ENCODE measurements at regions of chr9 and their contacts with region 1.

Region 1: DNA sequence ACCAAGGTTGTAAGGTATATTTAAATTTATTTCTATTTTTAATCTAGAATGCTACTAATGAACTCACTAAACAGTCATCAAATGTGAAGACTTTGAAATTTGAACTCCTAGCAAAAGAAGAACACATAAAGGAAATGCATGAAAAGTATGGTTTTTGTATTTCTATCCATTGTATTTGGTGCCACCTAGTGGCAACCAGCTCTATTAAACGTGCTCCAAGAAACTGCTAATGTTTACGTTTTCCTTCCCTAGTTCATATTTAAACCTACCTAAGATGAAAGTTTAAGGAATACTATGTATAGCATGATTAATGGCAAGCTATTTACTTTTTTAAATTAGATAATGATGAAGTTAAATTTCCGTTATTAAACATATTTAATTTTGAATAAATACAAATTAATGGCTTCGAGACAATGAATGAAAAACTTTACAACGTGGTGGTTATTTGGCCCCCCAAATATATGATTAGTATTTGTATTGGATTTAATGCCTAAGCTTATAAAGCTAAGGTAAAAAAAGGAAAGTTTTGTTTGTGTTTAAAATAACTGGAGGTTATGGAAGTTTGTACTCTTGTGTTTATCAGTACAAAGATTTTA is 115.9 kb upstream of the SH3GL2 start:
- ATAC-seq: peak in 4 of 8 experiments; percentile 34 to 49 (median 42)
- H3K4me3 ChIP-seq: no peak overlapping the region
- H3K27ac ChIP-seq: no peak overlapping the region
- H3K4me1 ChIP-seq: no peaks in the 10 kb centered on the region

Region 2: GRCh38 chr9:15837079-15837679 is 1625.8 kb before region 1 on chr9:
- in situ Hi-C with region 1: loop called in 1 of 9 experiments (anchors 25 kb)
- ATAC-seq: peak in 4 of 8 experiments; percentile 49 to 78 (median 67)
- H3K4me3 ChIP-seq: no peak overlapping the region
- H3K27ac ChIP-seq: no peak overlapping the region
- H3K4me1 ChIP-seq: no peaks in the 10 kb centered on the region

Region 3: GRCh38 chr9:15873569-15874177 is 1589.3 kb before region 1 on chr9:
- in situ Hi-C with region 1: loop called in 1 of 9 experiments (anchors 25 kb)
- ATAC-seq: peak; percentile 42 to 68 (median 49)
- H3K4me3 ChIP-seq: no peak overlapping the region
- H3K27ac ChIP-seq: no peak overlapping the region
- H3K4me1 ChIP-seq: peaks cover 4 to 18% of the 10 kb centered on the region in 2 donors

Region 4: GRCh38 chr9:16705121-16705604 is 757.8 kb before region 1 on chr9:
- in situ Hi-C with region 1: loop called in 1 of 9 experiments (anchors 25 kb)
- ATAC-seq: peak; percentile 77 to 93 (median 87)
- H3K4me3 ChIP-seq: peak overlapping the region in 1 of 5 donors; percentile 11
- H3K27ac ChIP-seq: peak overlapping the region in 1 of 2 donors; percentile 10
- H3K4me1 ChIP-seq: peaks cover 37 to 46% of the 10 kb centered on the region in 2 donors

Region 5: GRCh38 chr9:17116400-17116837 is 346.5 kb before region 1 on chr9:
- in situ Hi-C with region 1: loop called in 2 of 9 experiments (anchors 25 kb)
- ATAC-seq: peak in 3 of 8 experiments; percentile 56 to 63 (median 57)
- H3K4me3 ChIP-seq: no peak overlapping the region
- H3K27ac ChIP-seq: no peak overlapping the region
- H3K4me1 ChIP-seq: no peaks in the 10 kb centered on the region

Region 6: GRCh38 chr9:17219261-17219660 is 243.7 kb before region 1 on chr9:
- in situ Hi-C with region 1: loop called in 1 of 9 experiments (anchors 25 kb)
- ATAC-seq: no peak
- H3K4me3 ChIP-seq: no peak overlapping the region
- H3K27ac ChIP-seq: no peak overlapping the region
- H3K4me1 ChIP-seq: no peaks in the 10 kb centered on the region